PC-3 (cell line): ENCODE measurements at regions of chr5 and their contacts with region 1.

Region 1: DNA sequence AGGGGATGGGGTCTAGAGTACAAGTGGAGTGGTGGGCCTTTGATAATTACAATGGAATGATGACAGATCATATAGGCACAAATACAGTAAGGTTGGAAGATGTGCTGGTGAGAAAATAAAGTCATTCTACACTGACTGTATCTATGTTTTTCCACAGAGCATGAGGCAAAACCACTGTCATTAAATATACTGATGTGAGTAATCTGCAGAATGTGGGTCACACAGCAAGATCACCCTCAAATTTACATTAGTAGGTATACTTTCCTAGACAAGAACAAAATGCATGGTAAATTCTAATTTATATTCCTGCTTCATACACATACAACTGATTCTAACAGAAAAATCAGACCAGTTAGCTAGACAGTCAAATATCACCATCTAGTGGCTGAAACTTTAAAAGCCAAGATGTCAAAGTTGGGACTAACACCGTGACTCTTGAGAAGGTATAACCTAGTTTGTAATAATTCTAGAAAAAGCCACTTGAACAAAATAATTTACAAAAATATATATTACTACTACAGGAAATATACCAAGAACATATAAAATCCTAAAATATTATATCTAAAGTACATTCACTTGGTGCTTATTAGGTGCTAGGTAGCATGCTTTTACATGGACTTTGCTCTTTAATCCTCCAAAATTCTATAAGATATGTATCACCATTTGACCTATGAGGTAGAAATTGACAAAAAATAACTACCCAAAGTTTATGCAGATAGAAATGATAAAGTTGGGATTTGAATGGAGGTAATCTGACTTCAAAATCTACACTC is 19.5 kb downstream of the TTC33 start:
- DNase-seq: peak; percentile 95
- ATAC-seq: peak; percentile 61
- H3K4me3 ChIP-seq: no peak overlapping the region
- H3K27ac ChIP-seq: no peak overlapping the region
- H3K4me1 ChIP-seq: peaks cover 16% of the 10 kb centered on the region
- H3K27me3 ChIP-seq: no peaks in the 10 kb centered on the region
- CTCF ChIP-seq: peak; percentile 94

Region 2: GRCh38 chr5:39578887-39579497 is 1157.3 kb before region 1 on chr5:
- CTCF ChIA-PET with region 1: no interaction called
- POLR2A ChIA-PET with region 1: no interaction called
- intact Hi-C with region 1: loop called (anchors 5 kb)
- DNase-seq: peak; percentile 65
- ATAC-seq: no peak
- H3K4me3 ChIP-seq: no peak overlapping the region
- H3K27ac ChIP-seq: no peak overlapping the region
- H3K4me1 ChIP-seq: 0 out of 2 replicates have a peak, but pooled peaks cover 3% of the 10 kb centered on the region
- H3K27me3 ChIP-seq: no peaks in the 10 kb centered on the region
- CTCF ChIP-seq: peak; percentile 74

Region 3: DNA sequence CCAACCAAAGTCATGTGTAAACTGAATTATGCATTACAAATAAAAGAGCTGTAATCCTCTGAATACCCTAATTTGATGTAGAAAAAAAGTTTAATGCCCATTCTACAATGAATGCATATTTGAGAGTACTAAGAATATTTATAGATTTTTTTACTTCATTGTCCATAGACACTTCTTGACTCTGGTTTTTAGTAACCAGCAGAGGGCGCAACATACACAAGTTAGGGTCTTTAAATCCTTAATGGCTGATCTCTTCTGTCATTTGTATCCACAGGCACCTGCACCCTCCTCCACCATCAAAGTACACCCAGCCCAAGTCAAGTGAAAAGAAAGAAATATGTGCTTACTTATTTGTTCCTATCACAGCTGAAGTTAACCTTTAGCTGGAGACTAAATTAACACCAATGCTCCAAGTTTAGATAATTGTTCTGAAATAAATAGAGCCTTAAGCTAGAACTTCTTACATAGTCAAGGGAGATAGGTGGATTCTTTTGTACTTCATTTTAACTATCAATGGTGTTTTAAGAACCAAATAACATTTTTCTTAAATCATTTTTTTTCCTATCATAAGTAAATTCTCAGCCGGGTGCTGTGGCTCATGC is 787.3 kb before region 1 on chr5:
- CTCF ChIA-PET with region 1: no interaction called
- POLR2A ChIA-PET with region 1: no interaction called
- intact Hi-C with region 1: loop called (anchors 2 kb)
- DNase-seq: peak; percentile 89
- ATAC-seq: peak; percentile 81
- H3K4me3 ChIP-seq: no peak overlapping the region
- H3K27ac ChIP-seq: no peak overlapping the region
- H3K4me1 ChIP-seq: no peaks in the 10 kb centered on the region
- H3K27me3 ChIP-seq: no peaks in the 10 kb centered on the region
- CTCF ChIP-seq: peak; percentile 93

Region 4: GRCh38 chr5:40165794-40166728 is 570.2 kb before region 1 on chr5:
- CTCF ChIA-PET with region 1: no interaction called
- POLR2A ChIA-PET with region 1: no interaction called
- intact Hi-C with region 1: loop called (anchors 5 kb)
- DNase-seq: peak; percentile 55
- ATAC-seq: peak; percentile 66
- H3K4me3 ChIP-seq: no peak overlapping the region
- H3K27ac ChIP-seq: peak overlapping the region; percentile 32
- H3K4me1 ChIP-seq: peaks cover 17% of the 10 kb centered on the region
- H3K27me3 ChIP-seq: no peaks in the 10 kb centered on the region
- CTCF ChIP-seq: peak; percentile 46; the same call in 1 of the 2 replicates

Region 5: DNA sequence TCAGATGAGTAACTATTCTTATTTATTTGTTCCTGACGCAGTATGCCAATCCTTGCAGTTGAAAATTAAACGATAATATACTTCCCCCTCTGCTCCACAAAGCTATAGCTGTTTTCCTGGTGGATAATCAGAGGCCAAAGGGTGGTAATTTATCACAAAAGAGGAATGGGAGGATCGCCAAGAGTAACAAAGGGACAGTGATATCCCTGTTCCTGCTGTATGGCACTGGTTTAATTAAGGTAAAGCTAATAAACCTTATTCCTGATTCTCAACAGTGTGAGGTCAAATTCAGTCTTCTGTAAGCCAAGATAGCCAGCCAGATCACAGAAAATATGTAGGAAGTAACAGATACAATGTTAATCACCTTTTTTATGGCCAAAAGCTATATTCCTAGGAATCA is 90.0 kb before region 1 on chr5:
- CTCF ChIA-PET with region 1: no interaction called
- POLR2A ChIA-PET with region 1: no interaction called
- intact Hi-C with region 1: no loop called
- DNase-seq: peak; percentile 33
- ATAC-seq: peak; percentile 51
- H3K4me3 ChIP-seq: no peak overlapping the region
- H3K27ac ChIP-seq: no peak overlapping the region
- H3K4me1 ChIP-seq: peaks cover 10% of the 10 kb centered on the region
- H3K27me3 ChIP-seq: no peaks in the 10 kb centered on the region
- CTCF ChIP-seq: no peak

Region 6: GRCh38 chr5:40879163-40879942 is 143.1 kb after region 1 on chr5:
- CTCF ChIA-PET with region 1: no interaction called
- POLR2A ChIA-PET with region 1: no interaction called
- intact Hi-C with region 1: loop called (anchors 1 kb)
- DNase-seq: peak; percentile 66
- ATAC-seq: peak; percentile 60; the same call in 1 of the 2 replicates
- H3K4me3 ChIP-seq: no peak overlapping the region
- H3K27ac ChIP-seq: no peak overlapping the region
- H3K4me1 ChIP-seq: no peaks in the 10 kb centered on the region
- H3K27me3 ChIP-seq: no peaks in the 10 kb centered on the region
- CTCF ChIP-seq: peak; percentile 87

Region 7: GRCh38 chr5:40945111-40945510 is 208.8 kb after region 1 on chr5:
- CTCF ChIA-PET with region 1: no interaction called
- POLR2A ChIA-PET with region 1: no interaction called
- intact Hi-C with region 1: no loop called
- DNase-seq: no peak
- ATAC-seq: no peak
- H3K4me3 ChIP-seq: no peak overlapping the region
- H3K27ac ChIP-seq: no peak overlapping the region
- H3K4me1 ChIP-seq: no peaks in the 10 kb centered on the region
- H3K27me3 ChIP-seq: no peaks in the 10 kb centered on the region
- CTCF ChIP-seq: no peak